Activated CD8-positive, alpha-beta T cell treated with anti-CD3 and anti-CD28 coated beads for 36 hours (primary cell): ENCODE measurements at regions of chr20 and their contacts with region 1.

Region 1: DNA sequence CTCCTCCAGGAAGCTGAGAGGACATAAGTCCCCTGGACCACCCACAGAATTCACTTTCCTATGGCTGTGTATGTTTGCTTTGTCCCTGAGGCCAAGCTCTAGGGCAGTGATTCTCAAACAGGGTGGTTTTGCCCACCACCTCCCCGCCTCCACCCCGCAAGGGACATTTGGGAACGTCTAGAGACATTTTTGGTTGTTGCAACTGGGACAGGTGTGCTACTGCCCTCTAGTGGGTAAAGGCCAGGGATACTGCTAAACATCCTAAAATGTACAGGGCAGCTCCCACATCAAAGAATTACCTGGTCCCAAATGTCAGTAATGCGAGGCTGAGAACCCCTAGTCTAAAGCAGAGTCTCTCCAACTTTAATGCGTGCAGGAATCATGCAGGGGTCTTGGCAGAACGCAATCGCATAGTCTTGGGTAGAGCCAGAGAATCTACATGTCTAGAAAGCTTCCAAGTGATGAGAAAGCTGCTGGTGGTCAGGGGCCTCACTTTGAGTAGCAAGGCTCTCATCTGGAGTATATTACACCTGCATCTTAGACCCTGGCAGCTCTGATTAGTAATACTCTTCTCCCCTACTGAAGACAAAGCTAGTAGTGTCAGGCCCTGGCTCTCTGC is 5.1 kb downstream of the KCNS1 start:
- DNase-seq: peak; percentile 79
- ATAC-seq: peak; percentile 63
- H3K4me3 Mint-ChIP-seq: no peak overlapping the region
- H3K27ac Mint-ChIP-seq: no peak overlapping the region
- H3K4me1 Mint-ChIP-seq: peaks cover 13% of the 10 kb centered on the region
- H3K27me3 Mint-ChIP-seq: peaks cover 32% of the 10 kb centered on the region
- CTCF ChIP-seq: peak; percentile 82

Region 2: DNA sequence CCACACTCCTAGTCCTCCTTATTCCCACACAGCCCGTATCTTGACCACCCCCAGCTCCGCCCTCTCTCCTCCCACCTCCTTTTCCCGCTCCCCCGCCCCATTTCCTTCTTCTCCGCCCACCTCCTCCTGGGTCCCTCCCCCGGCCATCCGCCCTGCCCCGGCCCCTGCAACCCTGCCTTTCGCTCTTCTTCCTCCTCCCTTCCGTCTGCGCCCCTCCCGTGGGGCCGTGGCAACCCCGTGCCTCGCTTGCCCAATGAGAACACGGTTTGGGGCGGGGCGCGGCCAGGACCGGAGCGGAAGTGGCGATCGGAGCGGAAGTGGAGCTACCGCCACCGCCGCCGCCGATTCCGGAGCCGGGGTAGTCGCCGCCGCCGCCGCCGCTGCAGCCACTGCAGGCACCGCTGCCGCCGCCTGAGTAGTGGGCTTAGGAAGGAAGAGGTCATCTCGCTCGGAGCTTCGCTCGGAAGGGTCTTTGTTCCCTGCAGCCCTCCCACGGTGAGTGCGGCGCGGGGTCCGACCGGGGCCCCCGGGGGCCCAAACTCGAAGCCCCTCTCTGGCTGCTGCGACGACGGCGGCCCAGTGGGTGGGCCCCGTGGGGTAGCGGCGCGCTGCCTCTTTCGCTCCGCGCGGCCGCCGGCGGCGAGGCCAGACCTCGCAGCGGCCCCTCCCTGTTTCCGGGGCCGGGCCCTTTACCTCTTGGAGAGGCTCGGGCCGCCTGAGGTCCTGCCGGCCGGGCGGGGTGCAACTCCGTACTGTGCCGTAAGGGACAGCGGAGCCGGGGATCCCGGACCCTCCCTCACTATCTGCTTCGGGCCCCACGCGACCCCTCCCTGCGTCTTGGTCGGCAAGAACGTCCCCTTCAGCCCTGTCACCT is 210.2 kb before region 1 on chr20 and contains the start of gene YWHAB:
- CTCF ChIA-PET with region 1: no interaction called
- POLR2A ChIA-PET with region 1: no interaction called
- intact Hi-C with region 1: no loop called
- DNase-seq: peak; percentile 99
- ATAC-seq: peak; percentile 98
- H3K4me3 Mint-ChIP-seq: peak within 1 kb of the TSS; percentile 90
- H3K27ac Mint-ChIP-seq: peak within 1 kb of the TSS; percentile 92
- H3K4me1 Mint-ChIP-seq: peaks cover 44% of the 10 kb centered on the region
- H3K27me3 Mint-ChIP-seq: no peaks in the 10 kb centered on the region
- CTCF ChIP-seq: no peak
- total RNA-seq, gene YWHAB: 220 to 226 TPM

Region 3: GRCh38 chr20:44954166-44954565 is 141.7 kb before region 1 on chr20:
- CTCF ChIA-PET with region 1: interaction called, 12 read pairs
- POLR2A ChIA-PET with region 1: no interaction called
- intact Hi-C with region 1: no loop called
- DNase-seq: no peak
- ATAC-seq: no peak
- H3K4me3 Mint-ChIP-seq: no peak overlapping the region
- H3K27ac Mint-ChIP-seq: no peak overlapping the region
- H3K4me1 Mint-ChIP-seq: peaks cover 44% of the 10 kb centered on the region
- H3K27me3 Mint-ChIP-seq: no peaks in the 10 kb centered on the region
- CTCF ChIP-seq: no peak

Region 4: GRCh38 chr20:44997171-44998067 is 98.4 kb before region 1 on chr20:
- CTCF ChIA-PET with region 1: interaction called, 11 read pairs
- POLR2A ChIA-PET with region 1: no interaction called
- intact Hi-C with region 1: no loop called
- DNase-seq: peak; percentile 31
- ATAC-seq: peak; percentile 40
- H3K4me3 Mint-ChIP-seq: no peak overlapping the region
- H3K27ac Mint-ChIP-seq: peak overlapping the region; percentile 90
- H3K4me1 Mint-ChIP-seq: peaks cover 67% of the 10 kb centered on the region
- H3K27me3 Mint-ChIP-seq: no peaks in the 10 kb centered on the region
- CTCF ChIP-seq: no peak

Region 5: DNA sequence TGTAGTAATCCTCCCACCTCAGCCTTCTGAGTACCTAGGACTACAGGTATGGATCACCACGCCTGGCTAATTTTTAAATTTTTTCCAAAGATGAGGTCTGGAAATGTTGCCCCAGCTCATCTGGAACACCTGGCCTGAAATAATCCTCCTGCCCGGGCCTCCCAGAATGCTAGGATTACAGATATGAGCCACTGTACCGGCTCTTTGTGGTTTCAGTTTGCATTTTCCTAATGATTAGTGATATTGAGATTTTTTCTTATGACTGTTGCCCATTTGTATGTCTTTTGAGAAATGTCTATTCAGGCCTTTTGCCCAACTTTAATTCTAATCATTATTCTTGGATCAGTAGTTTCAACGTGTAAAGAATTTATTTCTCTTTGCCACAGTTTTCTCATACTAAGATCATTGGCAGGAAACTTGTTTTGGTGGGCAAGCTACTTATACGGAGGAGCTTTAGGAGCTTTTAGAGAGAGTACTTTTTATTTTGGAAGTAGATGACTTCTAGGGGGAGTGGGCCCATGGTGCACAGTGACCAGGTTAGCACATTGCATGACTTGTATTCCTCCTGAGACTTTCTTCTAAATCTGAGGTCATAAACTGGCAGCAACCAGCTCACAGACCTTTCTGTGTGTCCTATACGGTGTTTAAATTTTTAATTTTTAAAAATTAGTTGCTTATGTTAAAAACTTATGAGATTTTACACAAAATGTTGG is 67.3 kb before region 1 on chr20:
- CTCF ChIA-PET with region 1: interaction called, 20 read pairs
- POLR2A ChIA-PET with region 1: no interaction called
- intact Hi-C with region 1: no loop called
- DNase-seq: no peak
- ATAC-seq: no peak
- H3K4me3 Mint-ChIP-seq: no peak overlapping the region
- H3K27ac Mint-ChIP-seq: peak overlapping the region; percentile 71
- H3K4me1 Mint-ChIP-seq: peaks cover 64% of the 10 kb centered on the region
- H3K27me3 Mint-ChIP-seq: no peaks in the 10 kb centered on the region
- CTCF ChIP-seq: no peak

Region 6: DNA sequence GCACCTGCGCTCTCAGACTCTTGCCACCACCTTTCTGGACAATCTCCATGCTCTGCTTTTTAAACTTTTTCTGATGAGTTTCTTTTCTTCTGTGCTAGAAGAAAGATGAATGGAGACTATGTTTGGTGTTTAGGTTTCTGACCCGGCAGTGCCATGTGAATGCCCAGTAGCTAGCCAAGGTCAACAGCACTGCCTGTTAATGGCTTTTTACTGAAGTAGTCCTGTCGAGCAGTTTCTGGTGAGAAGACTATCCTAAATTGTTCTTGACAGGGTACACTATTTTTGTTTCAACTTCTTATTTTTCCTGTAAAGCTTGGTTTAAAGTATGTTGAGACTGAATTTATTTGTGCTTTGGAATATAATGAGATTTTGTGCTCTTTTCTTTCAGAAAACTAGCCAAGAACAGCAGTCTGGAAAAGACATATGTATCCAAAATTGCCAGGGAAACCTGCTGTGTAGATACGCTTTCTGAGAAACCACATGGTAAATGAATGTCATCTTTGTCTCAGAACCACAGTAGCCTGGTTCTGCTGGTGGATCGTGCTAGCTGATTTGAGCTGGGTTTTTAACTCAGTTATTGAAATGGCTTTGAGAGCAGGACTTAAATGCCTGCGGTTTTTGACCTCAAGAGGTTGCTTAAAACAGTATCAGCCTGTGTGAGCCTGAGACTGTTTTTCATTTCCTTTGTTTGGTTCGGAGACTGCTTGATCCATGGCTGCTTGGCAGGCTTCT is 43.0 kb before region 1 on chr20:
- CTCF ChIA-PET with region 1: interaction called, 111 read pairs
- POLR2A ChIA-PET with region 1: interaction called, 4 read pairs
- intact Hi-C with region 1: no loop called
- DNase-seq: peak; percentile 56
- ATAC-seq: peak; percentile 55
- H3K4me3 Mint-ChIP-seq: peak overlapping the region; percentile 2
- H3K27ac Mint-ChIP-seq: peak overlapping the region; percentile 85
- H3K4me1 Mint-ChIP-seq: peaks cover 83% of the 10 kb centered on the region
- H3K27me3 Mint-ChIP-seq: no peaks in the 10 kb centered on the region
- CTCF ChIP-seq: no peak

Region 7: GRCh38 chr20:45111799-45112471 is 16.1 kb after region 1 on chr20:
- CTCF ChIA-PET with region 1: interaction called, 117 read pairs
- POLR2A ChIA-PET with region 1: interaction called, 4 read pairs
- intact Hi-C with region 1: no loop called
- DNase-seq: peak; percentile 53
- ATAC-seq: peak; percentile 43
- H3K4me3 Mint-ChIP-seq: no peak overlapping the region
- H3K27ac Mint-ChIP-seq: no peak overlapping the region
- H3K4me1 Mint-ChIP-seq: peaks cover 17% of the 10 kb centered on the region
- H3K27me3 Mint-ChIP-seq: no peaks in the 10 kb centered on the region
- CTCF ChIP-seq: peak; percentile 76